Activated CD4-positive, alpha-beta memory T cell treated with anti-CD3 and anti-CD28 coated beads for 36 hours (primary cell): ENCODE measurements at regions of chr2 and their contacts with region 1.

Region 1: DNA sequence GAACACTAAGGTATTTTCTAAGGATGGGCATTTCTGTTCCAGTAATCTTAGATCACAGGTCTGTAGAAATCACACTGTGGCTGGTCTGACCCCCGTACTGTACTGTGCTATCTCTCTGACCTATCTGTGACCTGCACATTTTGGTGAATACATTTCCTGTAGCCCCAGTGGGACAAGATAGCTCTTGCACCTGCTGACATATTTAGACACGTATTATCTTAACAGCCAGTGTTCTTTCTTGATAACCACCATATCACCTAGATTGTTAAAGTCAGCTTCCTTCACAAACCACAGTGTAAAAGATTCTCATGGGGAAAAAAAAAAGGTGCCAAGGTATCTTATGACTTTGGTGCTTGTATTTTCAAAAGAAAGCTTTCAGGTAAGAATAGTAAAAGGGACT is 39.8 kb upstream of the TMEM247 start:
- DNase-seq: peak; percentile 28
- H3K4me3 Mint-ChIP-seq: no peak overlapping the region
- H3K27ac Mint-ChIP-seq: no peak overlapping the region
- H3K4me1 Mint-ChIP-seq: peaks cover 44% of the 10 kb centered on the region
- H3K27me3 Mint-ChIP-seq: no peaks in the 10 kb centered on the region

Region 2: GRCh38 chr2:46424937-46425336 is 14.6 kb before region 1 on chr2:
- CTCF ChIA-PET with region 1: no interaction called
- POLR2A ChIA-PET with region 1: interaction called, 3 read pairs
- intact Hi-C with region 1: loop called (anchors 2 kb)
- DNase-seq: no peak
- H3K4me3 Mint-ChIP-seq: no peak overlapping the region
- H3K27ac Mint-ChIP-seq: no peak overlapping the region
- H3K4me1 Mint-ChIP-seq: peaks cover 3% of the 10 kb centered on the region
- H3K27me3 Mint-ChIP-seq: no peaks in the 10 kb centered on the region